GM13976 (cell line): ENCODE measurements at regions of chr15 and their contacts with region 1.

Region 1: DNA sequence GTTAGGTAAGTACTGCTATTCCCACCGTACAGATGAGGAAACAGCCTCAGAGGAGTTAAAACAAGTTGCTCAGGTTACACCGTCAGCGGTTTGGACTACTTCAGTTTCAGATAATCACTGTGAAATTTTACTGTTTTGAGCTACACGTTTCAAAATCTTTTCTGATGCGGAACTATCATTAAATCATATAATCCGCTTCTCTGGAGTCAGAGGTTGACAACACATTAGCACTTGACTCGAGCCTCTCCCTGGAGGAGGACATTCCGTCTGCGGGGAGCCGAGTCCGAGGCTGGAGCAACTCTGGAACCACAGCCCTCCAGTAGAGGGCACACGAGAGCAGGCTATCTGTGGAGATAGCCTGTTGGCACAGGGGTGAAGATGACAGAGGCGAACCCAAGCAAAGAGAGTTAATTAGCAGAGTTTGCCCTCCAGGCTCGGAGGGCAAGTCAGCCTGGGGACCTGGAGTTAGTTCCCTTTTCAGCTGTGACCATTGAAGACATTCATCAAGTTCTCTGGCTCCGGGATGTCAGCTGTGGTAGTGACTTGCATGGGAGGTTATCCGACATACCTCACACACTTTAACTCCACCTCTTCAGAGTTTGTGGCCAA is 131.2 kb downstream of the IGF1R start:
- DNase-seq: peak; percentile 70
- CTCF ChIP-seq: peak; percentile 85

Region 2: GRCh38 chr15:98845107-98845884 is 65.7 kb after region 1 on chr15:
- in situ Hi-C with region 1: no loop called
- DNase-seq: no peak
- CTCF ChIP-seq: no peak

Region 3: DNA sequence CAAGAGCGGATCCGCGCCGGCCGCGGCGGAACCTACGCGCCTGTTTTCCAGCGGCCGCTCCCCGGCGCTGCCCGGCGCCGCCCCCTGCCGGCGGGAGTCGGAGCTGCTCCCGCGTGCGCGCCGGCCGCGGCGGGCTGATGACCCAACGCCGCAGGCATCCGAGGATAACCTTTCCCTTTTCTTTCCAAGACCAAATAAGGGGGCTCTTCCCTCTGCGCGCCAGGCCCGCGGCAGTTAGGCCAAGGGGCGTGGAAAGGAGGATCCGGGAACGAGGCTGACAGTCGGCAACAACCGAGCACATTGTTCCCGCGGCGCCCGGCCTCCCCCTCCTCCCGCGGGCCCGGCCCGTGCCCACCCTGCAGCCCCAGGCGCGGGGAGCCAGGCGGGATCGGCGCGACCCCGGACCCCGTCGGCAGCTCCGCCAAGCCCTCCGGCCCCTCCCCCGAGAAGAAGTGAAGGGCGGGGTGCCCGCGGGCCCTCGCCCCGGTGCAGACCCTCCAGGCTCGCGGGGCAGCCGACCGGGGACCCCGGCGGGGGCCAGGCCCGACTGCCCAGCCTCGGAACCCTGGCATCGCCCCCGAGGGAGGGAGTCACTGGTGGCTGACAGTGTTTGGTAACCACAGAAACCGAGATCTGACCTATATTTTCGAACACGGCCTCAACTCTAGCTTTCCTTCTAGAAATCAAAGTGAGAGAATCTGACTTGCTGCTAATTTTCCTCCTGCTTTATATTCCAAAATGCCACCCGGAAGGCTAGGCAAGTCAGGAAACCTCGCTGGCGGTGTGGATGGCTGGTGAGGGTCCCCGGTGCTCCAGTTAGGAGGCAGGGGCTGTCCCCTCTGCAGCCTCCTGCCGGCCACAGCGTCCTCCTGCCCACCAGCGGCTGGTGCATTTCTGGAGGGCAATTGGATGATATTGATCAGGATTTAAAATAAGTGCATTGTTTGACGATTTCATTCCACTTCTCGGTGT is 279.7 kb after region 1 on chr15:
- in situ Hi-C with region 1: loop called (anchors 25 kb)
- DNase-seq: peak; percentile 90
- CTCF ChIP-seq: peak; percentile 90